ENCODE measurements at regions of chr3 and their contacts with region 1.

Region 1: DNA sequence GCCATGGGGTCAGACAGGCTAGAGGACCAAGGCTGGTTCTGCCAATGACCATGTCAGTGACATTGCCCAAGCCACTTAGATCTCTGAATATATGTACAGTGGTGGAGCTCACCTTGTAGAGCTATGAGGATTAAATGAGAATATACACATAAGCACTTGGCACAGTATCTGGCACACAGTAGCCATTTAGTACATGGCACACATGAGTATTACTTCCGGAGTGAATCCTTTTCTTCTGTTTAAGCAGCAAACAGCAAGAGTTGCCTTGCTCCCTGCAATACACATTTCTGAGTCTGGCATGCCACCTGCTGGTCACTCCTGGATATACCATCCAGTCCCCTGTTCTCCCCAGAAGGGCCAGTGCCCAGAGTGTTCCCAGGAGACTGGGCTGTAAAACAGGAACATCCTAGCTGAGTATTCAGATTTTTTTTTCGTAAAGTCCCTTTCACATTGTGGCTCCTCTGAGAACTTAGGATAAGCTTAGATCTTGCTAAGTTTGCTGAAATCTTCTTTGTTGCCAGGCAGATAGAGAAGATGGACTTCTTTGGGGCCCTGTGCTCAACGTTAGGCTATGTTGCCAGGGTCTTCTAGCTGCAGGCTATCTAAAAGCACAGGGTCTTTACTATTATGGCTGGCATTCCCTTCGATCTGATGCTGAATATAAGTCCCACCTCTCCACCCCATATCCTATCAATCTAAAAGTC is 203.4 kb downstream of the ADAMTS9 start:
- DNase-seq: peak; percentile 39
- ATAC-seq: peak; percentile 90
- H3K4me3 Mint-ChIP-seq: no peak overlapping the region
- H3K27ac Mint-ChIP-seq: no peak overlapping the region
- H3K4me1 Mint-ChIP-seq: peaks cover 3% of the 10 kb centered on the region
- H3K27me3 Mint-ChIP-seq: peaks cover 14% of the 10 kb centered on the region
- CTCF ChIP-seq: peak; percentile 67

Region 2: DNA sequence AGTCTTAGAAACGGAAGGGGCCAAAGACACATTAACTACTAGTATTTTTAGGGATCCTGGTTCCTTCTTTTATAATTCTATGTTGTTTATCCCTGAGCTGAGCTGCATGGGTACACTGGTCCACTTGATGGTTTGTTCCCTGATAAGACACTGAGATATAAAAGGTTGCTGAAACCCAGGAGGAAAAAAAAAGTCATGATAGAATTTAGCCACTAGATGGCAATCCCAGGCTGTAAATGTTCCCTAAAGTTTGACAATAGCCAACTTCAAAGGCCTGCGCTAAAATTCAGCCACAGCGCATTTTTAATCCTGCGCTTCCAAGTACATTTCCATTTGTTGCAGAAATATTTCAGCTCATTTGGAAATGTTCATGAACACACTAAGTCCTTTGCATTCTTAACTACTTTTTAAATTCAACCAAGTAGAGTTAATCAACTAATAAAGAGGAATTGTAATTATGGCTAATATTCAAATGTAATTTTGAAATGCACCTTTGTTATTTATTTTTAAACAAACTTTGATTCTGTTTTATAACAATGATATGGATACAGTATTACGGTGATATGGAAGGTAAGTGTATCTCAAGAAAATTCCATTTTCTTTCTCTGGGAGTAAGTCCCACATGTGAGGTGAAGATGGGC is 1861.8 kb before region 1 on chr3:
- CTCF ChIA-PET with region 1: no interaction called
- POLR2A ChIA-PET with region 1: no interaction called
- intact Hi-C with region 1: loop called (anchors 2 kb)
- DNase-seq: no peak
- ATAC-seq: no peak
- H3K4me3 Mint-ChIP-seq: no peak overlapping the region
- H3K27ac Mint-ChIP-seq: no peak overlapping the region
- H3K4me1 Mint-ChIP-seq: peaks cover 2% of the 10 kb centered on the region
- H3K27me3 Mint-ChIP-seq: no peaks in the 10 kb centered on the region
- CTCF ChIP-seq: no peak

Region 3: DNA sequence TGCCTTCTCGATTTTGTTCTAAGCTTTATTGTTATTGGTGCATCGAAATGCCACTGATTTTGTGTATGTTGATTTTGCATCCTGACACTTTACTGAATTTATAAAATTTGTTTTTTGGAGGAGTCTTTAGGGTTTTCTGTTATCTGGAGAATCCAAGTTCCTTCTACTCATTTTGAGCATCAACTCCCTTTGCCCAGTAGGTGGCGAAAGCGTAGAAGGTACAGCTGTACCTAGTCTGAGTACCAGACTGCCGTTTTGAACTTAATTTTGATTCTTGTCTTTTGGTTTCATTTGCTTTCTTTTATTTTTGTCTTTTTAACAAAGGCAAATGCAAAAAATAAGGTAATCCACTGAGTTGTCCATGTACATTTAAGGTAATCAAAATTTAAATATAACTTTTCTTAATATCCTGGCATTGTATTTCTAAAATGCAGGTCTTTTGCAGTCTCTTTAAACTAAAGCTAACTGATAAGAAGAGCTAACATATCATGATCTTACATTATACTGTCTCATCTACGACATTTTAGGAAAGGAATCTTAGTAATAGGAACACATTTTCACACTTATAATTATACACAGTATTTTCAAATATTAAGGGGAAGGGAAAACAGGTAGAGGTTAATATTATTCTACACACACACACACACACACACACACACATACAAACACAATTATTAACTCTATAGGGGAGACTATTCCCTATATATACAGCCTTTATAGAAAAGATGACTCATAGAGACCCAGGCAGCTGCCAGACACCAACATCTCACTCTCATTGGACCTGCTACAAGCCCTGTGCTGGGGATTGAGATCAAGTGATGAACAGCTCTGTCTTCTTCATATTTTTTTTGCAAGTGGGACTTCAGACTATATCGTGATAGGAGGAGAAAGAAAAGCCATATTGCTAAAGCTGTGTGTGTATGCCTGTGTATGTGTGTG is 1134.6 kb before region 1 on chr3:
- CTCF ChIA-PET with region 1: interaction called, 4 read pairs
- POLR2A ChIA-PET with region 1: no interaction called
- intact Hi-C with region 1: loop called (anchors 2 kb)
- DNase-seq: no peak
- ATAC-seq: no peak
- H3K4me3 Mint-ChIP-seq: no peak overlapping the region
- H3K27ac Mint-ChIP-seq: no peak overlapping the region
- H3K4me1 Mint-ChIP-seq: no peaks in the 10 kb centered on the region
- H3K27me3 Mint-ChIP-seq: peaks cover 16% of the 10 kb centered on the region
- CTCF ChIP-seq: no peak

Region 4: GRCh38 chr3:64023187-64023848 is 461.1 kb before region 1 on chr3 and contains the start of gene PSMD6:
- CTCF ChIA-PET with region 1: interaction called, 52 read pairs
- POLR2A ChIA-PET with region 1: no interaction called
- intact Hi-C with region 1: loop called (anchors 2 kb)
- DNase-seq: peak; percentile 99
- ATAC-seq: peak; percentile 97
- H3K4me3 Mint-ChIP-seq: peak within 1 kb of the TSS; percentile 88
- H3K27ac Mint-ChIP-seq: peak within 1 kb of the TSS; percentile 81
- H3K4me1 Mint-ChIP-seq: peaks cover 27% of the 10 kb centered on the region
- H3K27me3 Mint-ChIP-seq: peaks cover 6% of the 10 kb centered on the region
- CTCF ChIP-seq: peak; percentile 97
- total RNA-seq, gene PSMD6: 88.9 and 91.4 TPM in 2 replicates

Region 5: DNA sequence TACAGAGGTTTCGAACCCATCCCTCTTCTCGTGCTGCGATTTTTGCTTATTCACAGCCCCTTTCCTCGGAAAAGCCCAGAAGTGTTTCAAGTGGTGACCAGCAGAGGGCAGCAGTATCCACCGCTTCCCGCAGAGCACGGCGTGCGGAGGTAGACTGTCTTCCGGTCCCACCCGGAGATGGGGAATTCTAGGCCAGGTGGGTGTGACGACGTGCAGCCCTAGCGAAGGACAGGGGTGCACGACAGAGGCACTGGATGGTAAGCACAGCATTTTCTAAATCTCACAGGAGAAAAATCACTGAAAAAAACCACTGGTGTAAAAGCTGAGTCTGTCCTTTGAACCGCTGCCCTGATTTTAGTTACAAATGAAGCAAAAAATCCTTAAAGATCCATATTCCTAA is 453.7 kb before region 1 on chr3:
- CTCF ChIA-PET with region 1: interaction called, 52 read pairs
- POLR2A ChIA-PET with region 1: no interaction called
- intact Hi-C with region 1: loop called (anchors 1 kb)
- DNase-seq: peak; percentile 59
- ATAC-seq: peak; percentile 98
- H3K4me3 Mint-ChIP-seq: peak overlapping the region; percentile 80
- H3K27ac Mint-ChIP-seq: peak overlapping the region; percentile 76
- H3K4me1 Mint-ChIP-seq: peaks cover 6% of the 10 kb centered on the region
- H3K27me3 Mint-ChIP-seq: peaks cover 20% of the 10 kb centered on the region
- CTCF ChIP-seq: no peak